Endothelial cell of umbilical vein (primary cell): ENCODE measurements at regions of chr5 and their contacts with region 1.

Region 1: GRCh38 chr5:176415952-176416924 is at the start of gene CLTB:
- DNase-seq: peak; percentile 81
- H3K4me3 ChIP-seq: peak within 1 kb of the TSS; percentile 78 to 84 (median 82)
- H3K27ac ChIP-seq: peak within 1 kb of the TSS; percentile 86
- H3K4me1 ChIP-seq: peaks cover 12% of the 10 kb centered on the region
- H3K27me3 ChIP-seq: no peaks in the 10 kb centered on the region
- CTCF ChIP-seq: peak; percentile 65 to 86
- POLR2A ChIP-seq: peak; percentile 67
- total RNA-seq, gene CLTB: 73.2 and 108 TPM in 2 replicates

Region 2: GRCh38 chr5:176388444-176389134 is 27.6 kb before region 1 on chr5 and contains the starts of genes HIGD2A and NOP16:
- CTCF ChIA-PET with region 1: interaction called, 4 read pairs
- POLR2A ChIA-PET with region 1: no interaction called
- dilution Hi-C with region 1: no loop called
- intact Hi-C with region 1: loop called (anchors 1 kb)
- DNase-seq: peak; percentile 98
- H3K4me3 ChIP-seq: peak within 1 kb of the TSS; percentile 64 to 85 (median 65)
- H3K27ac ChIP-seq: peak within 1 kb of the TSS; percentile 79
- H3K4me1 ChIP-seq: peaks cover 14% of the 10 kb centered on the region
- H3K27me3 ChIP-seq: no peaks in the 10 kb centered on the region
- CTCF ChIP-seq: no peak
- POLR2A ChIP-seq: peak; percentile 74
- total RNA-seq, gene HIGD2A: 96.2 and 103 TPM in 2 replicates
- total RNA-seq, gene NOP16: 47.4 and 51.6 TPM in 2 replicates

Region 3: GRCh38 chr5:176441921-176442323 is 25.7 kb after region 1 on chr5:
- CTCF ChIA-PET with region 1: interaction called, 88 read pairs
- POLR2A ChIA-PET with region 1: no interaction called
- dilution Hi-C with region 1: no loop called
- intact Hi-C with region 1: loop called (anchors 1 kb)
- DNase-seq: peak; percentile 92
- H3K4me3 ChIP-seq: no peak overlapping the region
- H3K27ac ChIP-seq: peak overlapping the region; percentile 88
- H3K4me1 ChIP-seq: peaks cover 33% of the 10 kb centered on the region
- H3K27me3 ChIP-seq: no peaks in the 10 kb centered on the region
- CTCF ChIP-seq: no peak
- POLR2A ChIP-seq: no peak

Region 4: DNA sequence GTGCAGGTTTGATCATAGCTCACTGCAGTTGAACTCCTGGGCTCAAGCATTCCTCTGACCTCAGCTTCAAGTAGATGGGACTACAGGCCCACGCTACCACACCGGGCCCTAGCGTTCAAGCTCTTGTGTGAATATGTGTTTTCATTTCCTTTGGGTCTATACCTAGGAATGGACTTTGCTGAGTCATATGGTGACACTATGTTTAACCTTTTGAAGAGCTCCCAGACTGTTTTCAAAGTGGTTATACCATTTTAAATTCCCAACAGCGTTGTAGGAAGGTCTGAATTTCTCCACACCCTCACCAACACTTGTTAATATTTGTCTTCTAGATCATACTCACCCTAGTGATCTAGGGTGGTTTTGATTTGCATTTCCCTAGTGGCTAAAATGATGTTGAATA is 65.5 kb after region 1 on chr5:
- CTCF ChIA-PET with region 1: interaction called, 6 read pairs
- POLR2A ChIA-PET with region 1: no interaction called
- dilution Hi-C with region 1: no loop called
- intact Hi-C with region 1: loop called (anchors 5 kb)
- DNase-seq: no peak
- H3K4me3 ChIP-seq: no peak overlapping the region
- H3K27ac ChIP-seq: no peak overlapping the region
- H3K4me1 ChIP-seq: no peaks in the 10 kb centered on the region
- H3K27me3 ChIP-seq: no peaks in the 10 kb centered on the region
- CTCF ChIP-seq: no peak
- POLR2A ChIP-seq: no peak

Region 5: DNA sequence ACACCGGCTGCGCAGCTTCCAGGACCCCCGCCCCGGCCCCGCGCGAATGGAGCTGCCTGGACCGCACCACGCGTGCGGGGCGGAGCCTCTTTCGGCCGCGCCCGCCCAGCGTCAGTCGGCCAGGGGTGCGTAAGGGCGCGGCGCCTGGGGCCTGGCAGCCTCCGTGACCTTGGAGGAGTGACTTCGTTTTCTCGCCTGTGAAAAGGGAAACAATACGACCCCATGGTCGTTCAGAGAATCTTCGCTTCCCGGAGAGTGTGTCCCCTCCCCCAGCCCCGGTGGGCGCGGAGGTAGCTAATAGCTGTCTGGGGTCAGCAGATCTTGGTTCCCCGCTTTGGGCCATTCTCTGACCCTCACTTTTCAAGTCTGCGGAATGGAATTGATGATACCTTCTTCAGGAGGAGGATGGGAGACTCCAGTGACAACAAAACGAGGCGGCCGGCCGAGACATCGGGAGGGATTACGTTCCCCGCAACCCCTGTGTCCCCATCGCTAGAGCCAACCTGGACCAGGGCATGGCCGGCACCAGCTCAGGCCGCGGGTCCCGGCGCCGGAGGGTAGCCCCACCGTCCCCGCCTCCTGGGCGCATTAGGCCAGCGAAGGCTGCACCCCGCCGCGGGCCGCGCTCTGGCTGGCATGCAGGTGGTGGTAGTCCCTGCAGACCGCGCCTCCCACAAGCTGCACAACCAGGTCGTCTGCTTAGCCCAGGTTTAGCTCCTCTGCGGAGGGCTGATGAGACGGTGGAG is 127.4 kb after region 1 on chr5:
- CTCF ChIA-PET with region 1: interaction called, 18 read pairs
- POLR2A ChIA-PET with region 1: no interaction called
- dilution Hi-C with region 1: no loop called
- intact Hi-C with region 1: no loop called
- DNase-seq: no peak
- H3K4me3 ChIP-seq: peak overlapping the region; percentile 50 to 69 (median 64)
- H3K27ac ChIP-seq: no peak overlapping the region
- H3K4me1 ChIP-seq: peaks cover 31% of the 10 kb centered on the region
- H3K27me3 ChIP-seq: no peaks in the 10 kb centered on the region
- CTCF ChIP-seq: no peak
- POLR2A ChIP-seq: peak; percentile 36

Region 6: DNA sequence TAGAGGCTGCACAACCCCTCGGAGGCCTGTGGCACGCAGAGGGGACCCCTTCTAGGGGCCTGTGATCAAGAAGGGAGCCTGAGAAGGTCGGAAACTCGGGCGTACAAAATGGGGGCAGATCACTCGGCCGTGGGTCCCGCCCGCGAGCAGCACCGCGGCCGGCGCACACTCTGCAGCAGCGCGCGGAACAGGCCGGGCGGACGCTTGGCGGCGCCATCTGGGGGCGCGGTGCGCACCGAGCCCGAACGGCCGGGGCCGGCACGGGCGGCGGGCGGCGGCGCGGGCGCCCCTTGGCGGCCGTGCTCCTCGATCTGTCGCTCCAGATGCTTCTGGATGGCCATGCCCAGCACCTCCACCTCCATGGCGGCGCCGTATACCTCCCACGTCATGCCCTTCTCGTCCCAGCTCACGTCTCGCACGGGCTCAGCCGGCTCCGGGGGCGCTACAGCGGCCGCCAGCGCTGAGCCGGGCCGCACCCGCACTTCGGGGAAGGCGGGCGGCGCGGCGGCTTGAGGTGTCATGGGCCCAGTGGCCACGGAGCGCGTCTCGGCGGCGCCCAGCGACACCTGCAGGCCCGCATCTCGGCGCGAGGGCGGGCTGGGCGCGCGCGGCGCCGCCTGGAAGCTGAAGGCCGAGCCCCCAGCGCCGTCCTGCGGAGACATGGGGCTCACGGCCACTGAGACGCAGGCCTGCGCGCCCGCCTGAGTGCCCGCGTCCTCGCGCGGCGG is 180.6 kb after region 1 on chr5:
- CTCF ChIA-PET with region 1: no interaction called
- POLR2A ChIA-PET with region 1: no interaction called
- dilution Hi-C with region 1: no loop called
- intact Hi-C with region 1: loop called (anchors 1 kb)
- DNase-seq: peak; percentile 60
- H3K4me3 ChIP-seq: peak overlapping the region in 1 of 3 experiments; percentile 34
- H3K27ac ChIP-seq: no peak overlapping the region
- H3K4me1 ChIP-seq: no peaks in the 10 kb centered on the region
- H3K27me3 ChIP-seq: no peaks in the 10 kb centered on the region
- CTCF ChIP-seq: peak in 1 of 2 donors; percentile 26
- POLR2A ChIP-seq: no peak